ENCODE measurements at regions of chr16 and their contacts with region 1.

Region 1: DNA sequence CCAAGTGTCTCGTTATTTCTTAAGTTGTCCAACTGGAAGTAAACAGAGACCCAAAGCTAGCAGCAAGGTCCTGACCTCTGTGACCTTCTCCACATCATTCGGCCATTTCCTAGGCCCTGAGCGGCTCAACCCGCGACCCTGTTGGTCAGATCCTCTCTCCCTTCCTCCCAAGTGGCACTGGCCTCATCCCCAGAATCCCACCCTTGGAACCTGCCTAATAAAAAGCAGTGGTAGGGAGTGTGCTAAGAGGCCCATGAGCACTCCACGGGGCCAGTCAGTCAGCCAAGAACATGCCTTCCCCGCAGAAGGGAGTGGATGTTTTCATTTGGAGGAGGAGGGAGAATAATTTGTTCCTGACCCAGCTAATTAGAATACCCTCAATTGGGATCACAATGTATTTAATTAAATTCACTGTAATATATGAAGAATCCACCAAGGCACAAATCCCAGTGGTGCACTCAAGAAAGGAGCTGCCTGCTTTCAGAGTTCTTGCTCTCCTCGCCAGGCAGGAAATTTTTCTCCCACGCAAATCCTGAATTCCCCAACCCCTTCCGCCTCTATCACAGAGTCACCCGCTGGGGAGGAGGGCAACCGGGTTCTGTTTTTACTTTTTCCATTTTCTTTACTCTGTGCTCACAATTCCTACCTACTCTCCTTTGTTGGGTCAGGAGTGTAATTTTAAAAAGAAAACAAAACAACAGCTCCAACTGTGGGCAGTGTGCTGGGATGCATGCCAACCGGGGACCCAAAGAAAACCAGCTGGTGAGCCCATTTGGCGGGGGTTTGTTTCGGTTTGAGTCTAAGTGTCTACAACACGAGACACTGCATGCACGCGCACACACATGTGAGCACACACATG is 153.4 kb downstream of the ZFHX3 start:
- DNase-seq: peak in 4 of 5 donors; percentile 44 to 60 (median 50)
- ATAC-seq: peak; percentile 36 to 76 (median 59)
- H3K4me3 ChIP-seq: peak overlapping the region in 3 of 12 donors; percentile 2 to 18 (median 7)
- H3K27ac ChIP-seq: peak overlapping the region in 11 of 12 donors; percentile 23 to 76 (median 57)
- H3K4me1 ChIP-seq: peaks cover 0 to 45% (median 15%) of the 10 kb centered on the region in 12 donors
- H3K27me3 ChIP-seq: no peaks in the 10 kb centered on the region
- CTCF ChIP-seq: no peak
- POLR2A ChIP-seq: no peak

Region 2: DNA sequence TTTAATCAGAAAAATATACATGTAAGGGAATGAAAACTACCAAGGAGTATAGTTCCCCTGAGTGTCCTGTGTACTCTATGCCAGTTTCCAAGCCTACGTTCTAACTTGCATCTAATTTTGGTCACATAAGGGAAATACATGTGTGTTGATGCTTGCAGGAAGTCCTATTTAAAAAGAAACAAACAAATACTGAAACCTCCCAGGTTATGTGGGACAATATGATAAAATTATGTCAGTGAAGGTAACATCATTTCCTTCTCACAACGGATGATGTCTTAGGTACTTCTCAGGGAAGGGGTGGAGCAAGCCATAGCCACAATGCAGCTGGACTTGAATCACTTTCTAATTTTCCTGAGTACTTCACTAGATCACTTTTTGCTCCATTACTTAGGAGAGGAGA is 37.5 kb after region 1 on chr16:
- intact Hi-C with region 1: loop called in 1 of 10 experiments (anchors 5 kb)
- DNase-seq: no peak
- ATAC-seq: peak in 3 of 4 donors; percentile 15 to 49 (median 34)
- H3K4me3 ChIP-seq: peak overlapping the region in 2 of 12 donors; percentile 7 to 18
- H3K27ac ChIP-seq: peak overlapping the region in 10 of 12 donors; percentile 6 to 73 (median 46)
- H3K4me1 ChIP-seq: peaks cover 0 to 72% (median 24%) of the 10 kb centered on the region in 12 donors
- H3K27me3 ChIP-seq: no peaks in the 10 kb centered on the region
- CTCF ChIP-seq: no peak
- POLR2A ChIP-seq: no peak